Motor neuron (in vitro differentiated cells): ENCODE measurements at regions of chr20 and their contacts with region 1.

Region 1: DNA sequence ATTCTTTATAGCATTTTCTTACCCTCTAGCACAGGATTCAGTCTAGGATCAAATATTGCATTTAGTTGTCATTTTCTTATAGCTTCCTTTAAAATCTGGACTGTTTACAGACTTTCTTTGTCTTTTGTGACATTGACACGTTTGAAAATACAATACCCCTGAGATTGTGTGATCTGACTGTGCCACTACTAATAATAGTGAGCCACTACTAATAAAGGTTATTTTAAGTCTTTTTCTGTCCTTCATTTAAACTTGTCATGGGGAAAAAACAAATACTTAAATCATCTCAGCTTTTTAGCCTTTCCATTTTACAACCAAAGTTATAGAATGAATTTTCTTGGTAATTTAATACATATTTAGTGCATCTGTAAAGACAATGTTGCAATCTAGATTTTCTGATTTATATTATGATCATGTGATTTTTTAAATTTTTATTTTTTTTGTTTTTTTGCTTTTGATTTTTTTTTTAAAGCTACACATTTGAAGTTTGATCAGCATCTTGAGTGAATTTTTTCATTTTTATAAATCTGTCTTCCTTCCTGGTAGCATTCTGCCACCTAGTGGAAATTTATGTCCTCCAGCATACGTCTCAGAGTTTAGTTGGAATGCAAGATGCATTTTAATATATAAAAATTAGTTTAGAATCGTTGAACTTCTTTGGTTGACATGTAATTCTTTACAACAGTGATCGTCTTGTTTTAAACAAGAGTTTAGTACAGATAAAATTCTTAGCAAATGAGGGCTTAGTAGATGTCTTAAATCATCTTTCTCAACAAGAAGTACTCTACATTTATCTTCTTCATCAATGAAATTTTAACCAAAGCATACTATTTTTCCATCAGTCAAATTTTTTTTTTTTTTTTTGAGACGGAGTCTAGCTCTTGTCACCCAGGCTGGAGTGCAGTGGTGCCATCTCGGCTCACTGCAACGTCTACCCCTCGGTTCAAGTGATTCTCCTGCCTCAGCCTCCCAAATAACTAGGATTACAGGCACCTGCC is 119.4 kb downstream of the NCOA3 start:
- ATAC-seq: peak in 4 of 8 experiments; percentile 12 to 50 (median 29)
- H3K4me3 ChIP-seq: no peak overlapping the region
- H3K27ac ChIP-seq: no peak overlapping the region
- H3K4me1 ChIP-seq: peaks cover 0 to 3% of the 10 kb centered on the region in 2 donors

Region 2: DNA sequence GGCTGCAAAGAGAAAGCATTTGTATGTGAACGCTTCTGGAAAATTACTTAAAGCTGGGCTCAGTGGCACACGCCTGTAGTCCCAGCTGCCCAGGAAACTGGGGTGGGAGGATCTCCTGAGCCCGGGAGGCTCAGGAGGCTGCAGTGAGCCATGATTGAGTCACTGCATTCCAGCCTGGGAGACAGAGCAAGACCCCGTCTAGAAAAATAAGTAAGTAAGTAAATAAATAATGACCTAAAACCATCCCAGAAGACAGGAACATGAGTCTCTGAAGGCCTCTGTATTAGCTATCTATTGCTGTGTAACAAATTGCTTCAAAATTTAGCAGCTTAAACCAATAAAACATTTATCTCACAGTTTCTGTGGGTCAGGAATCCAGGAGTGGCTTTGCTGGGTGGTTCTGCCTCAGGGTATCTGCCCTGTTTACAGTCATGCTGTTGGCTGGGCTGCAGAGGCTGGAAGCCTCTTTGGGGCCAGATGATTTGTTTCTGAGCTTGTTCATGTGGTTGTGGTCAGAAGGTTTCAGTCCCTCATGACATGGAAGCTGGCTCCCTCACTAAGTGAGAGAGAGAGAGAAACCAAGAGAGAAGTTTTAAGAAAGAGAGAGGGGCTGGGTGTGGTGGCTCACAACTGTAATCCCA is 167.8 kb before region 1 on chr20:
- in situ Hi-C with region 1: loop called in 1 of 9 experiments (anchors 25 kb)
- ATAC-seq: peak in 3 of 8 experiments; percentile 68 to 97 (median 95)
- H3K4me3 ChIP-seq: no peak overlapping the region
- H3K27ac ChIP-seq: no peak overlapping the region
- H3K4me1 ChIP-seq: no peaks in the 10 kb centered on the region

Region 3: DNA sequence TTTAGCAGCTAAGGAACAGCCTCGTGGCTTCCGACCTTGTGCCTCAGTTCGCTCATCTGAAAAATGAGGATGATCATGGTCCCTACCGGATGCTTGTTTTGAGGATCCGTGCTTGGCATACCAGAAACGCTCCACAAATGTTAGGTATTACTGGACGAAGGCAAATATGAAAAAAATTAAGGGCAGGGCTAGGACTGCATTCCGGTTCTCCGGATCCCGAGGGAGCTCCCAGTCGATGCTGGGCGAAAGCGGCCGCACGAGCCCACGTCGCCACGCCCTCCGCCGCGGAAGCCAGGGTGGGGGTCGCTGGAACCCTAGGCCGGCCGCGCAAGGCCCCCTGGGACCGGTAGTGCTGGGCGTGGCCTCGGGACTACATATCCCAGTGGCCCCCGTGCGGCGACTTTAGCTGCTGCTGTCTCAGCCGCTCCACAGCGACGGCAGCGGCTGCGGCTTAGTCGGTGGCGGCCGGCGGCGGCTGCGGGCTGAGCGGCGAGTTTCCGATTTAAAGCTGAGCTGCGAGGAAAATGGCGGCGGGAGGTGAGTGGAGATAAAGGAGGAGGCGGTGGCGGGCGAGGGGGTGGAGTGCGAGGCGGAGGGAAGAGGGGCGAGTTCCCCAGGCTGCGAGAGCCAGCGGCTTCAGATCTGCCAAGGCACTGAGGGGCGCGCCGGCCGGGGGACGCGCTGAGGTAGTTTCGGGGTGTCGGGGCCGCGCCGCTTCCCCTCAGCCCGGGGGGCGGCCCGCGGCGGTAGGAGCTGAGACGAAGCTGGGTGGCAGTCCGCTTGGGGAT is 119.4 kb before region 1 on chr20 and contains the start of gene NCOA3:
- in situ Hi-C with region 1: loop called in 2 of 9 experiments (anchors 25 kb)
- ATAC-seq: peak; percentile 93 to 98 (median 98)
- H3K4me3 ChIP-seq: peak within 1 kb of the TSS; percentile 58 to 87 (median 76)
- H3K27ac ChIP-seq: peak within 1 kb of the TSS; percentile 65 to 83
- H3K4me1 ChIP-seq: peaks cover 7 to 11% of the 10 kb centered on the region in 2 donors
- total RNA-seq, gene NCOA3: 24.4 to 81.9 (median 31.1) TPM